RWPE1 (cell line): ENCODE measurements at regions of chr17 and their contacts with region 1.

Region 1: DNA sequence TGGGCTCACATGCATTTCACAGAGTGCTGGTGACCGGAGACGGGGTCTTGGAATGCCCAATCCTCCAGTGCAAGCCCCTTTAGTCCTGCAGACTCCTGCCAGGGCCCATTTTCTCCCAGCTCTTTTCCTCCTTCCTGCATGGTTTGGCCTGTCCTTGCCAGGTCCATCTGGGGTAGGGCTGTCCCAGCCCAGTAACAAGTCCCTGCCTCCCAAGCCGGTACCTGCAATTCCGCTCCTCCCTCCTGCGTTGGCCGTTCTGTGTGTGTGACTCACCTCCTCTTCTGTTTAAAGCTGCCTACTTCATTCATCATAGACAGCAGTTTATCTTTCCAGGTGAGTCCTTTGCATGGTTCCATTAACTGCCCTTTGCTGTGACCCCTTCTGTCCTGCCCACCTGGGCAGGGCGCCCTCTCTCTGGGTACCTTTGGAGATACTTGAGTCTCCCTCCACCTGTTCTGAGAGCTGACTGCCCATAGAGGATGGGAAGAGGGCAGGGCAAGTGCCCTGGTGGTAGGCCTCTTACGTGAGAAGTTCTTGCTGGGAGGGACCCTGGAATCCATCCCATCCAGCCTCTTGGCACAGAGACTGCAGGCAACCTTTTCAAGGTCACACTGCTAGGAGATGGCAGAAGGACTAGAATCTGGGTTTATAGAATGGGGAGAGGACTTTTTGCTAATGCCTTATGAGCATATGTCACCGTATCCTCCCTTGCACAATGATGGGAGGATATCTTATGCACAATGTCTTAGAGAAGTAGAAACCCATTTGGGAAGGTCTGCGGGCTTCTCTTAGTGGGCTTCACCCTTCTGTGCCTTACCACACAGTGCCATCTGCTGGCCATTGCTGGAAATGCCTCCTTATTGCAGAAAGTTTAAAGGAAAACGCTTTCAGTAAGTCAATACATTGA is 29.7 kb upstream of the LGALS9 start:
- DNase-seq: peak; percentile 69
- H3K27ac ChIP-seq: no peak overlapping the region
- CTCF ChIP-seq: peak; percentile 90

Region 2: DNA sequence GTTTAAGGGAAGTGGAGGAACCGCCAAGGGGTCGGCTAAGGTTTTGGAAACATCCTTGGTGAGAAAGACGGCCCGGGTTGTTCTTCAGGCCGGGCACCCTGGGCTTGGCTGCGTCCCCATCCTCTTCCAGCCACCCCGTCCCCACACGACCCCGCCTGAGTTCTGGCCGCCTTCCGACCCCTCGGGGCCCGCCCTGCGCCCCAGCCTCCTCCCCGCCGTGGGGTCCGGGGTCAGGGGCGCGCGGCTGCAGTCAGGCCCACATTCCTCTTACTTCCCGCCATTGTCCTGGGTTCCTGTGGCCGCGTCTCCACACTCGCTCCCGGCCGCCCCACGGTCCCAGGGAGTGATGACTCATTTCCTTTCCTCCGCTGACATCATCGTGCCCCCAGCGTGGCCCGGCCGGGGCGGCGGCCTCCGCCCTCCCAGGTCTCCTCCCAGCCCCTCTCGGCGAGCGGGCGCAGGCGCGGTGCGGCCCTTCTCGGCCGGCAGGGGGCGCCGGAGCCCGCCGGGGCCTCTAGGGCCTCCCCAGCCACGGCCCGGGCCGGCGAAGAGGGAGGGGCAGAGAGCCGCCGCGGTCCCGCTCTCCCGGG is 247.8 kb before region 1 on chr17:
- CTCF ChIA-PET with region 1: interaction called, 11 read pairs
- POLR2A ChIA-PET with region 1: no interaction called
- DNase-seq: peak; percentile 96
- H3K27ac ChIP-seq: peak overlapping the region; percentile 85
- CTCF ChIP-seq: peak; percentile 97

Region 3: GRCh38 chr17:27494192-27495091 is 106.9 kb before region 1 on chr17:
- CTCF ChIA-PET with region 1: interaction called, 18 read pairs
- POLR2A ChIA-PET with region 1: no interaction called
- DNase-seq: peak; percentile 65
- H3K27ac ChIP-seq: peak overlapping the region; percentile 93
- CTCF ChIP-seq: peak; percentile 61

Region 4: DNA sequence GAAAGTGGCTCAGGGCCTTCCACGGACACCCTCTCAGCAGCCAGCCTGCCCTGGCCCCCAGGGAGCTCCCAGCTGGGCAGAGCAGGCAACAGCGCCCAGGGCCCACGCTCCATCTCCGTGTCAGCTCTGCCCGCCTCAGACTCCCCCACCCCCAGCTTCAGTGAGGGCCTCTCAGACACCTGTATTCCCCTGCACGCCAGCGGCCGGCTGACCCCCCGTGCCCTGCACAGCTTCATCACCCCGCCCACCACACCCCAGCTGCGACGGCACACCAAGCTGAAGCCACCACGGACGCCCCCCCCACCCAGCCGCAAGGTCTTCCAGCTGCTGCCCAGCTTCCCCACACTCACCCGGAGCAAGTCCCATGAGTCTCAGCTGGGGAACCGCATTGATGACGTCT is 18.6 kb before region 1 on chr17:
- CTCF ChIA-PET with region 1: no interaction called
- POLR2A ChIA-PET with region 1: no interaction called
- DNase-seq: no peak
- H3K27ac ChIP-seq: no peak overlapping the region
- CTCF ChIP-seq: no peak

Region 5: GRCh38 chr17:27622986-27623385 is 21.7 kb after region 1 on chr17:
- CTCF ChIA-PET with region 1: no interaction called
- POLR2A ChIA-PET with region 1: no interaction called
- DNase-seq: no peak
- H3K27ac ChIP-seq: no peak overlapping the region
- CTCF ChIP-seq: no peak

Region 6: GRCh38 chr17:27958708-27959381 is 357.5 kb after region 1 on chr17:
- CTCF ChIA-PET with region 1: interaction called, 11 read pairs
- POLR2A ChIA-PET with region 1: no interaction called
- DNase-seq: no peak
- H3K27ac ChIP-seq: no peak overlapping the region
- CTCF ChIP-seq: no peak